Heart right ventricle (tissue), 16 donors: ENCODE measurements at regions of chrX and their contacts with region 1.

Region 1: GRCh38 chrX:12974796-12975669 is at the start of gene TMSB4X:
- DNase-seq: peak; percentile 83
- ATAC-seq: peak; percentile 77 to 95 (median 86)
- H3K4me3 ChIP-seq: peak within 1 kb of the TSS; percentile 50 to 98 (median 86)
- H3K27ac ChIP-seq: peak within 1 kb of the TSS; percentile 88 to 99 (median 96)
- H3K4me1 ChIP-seq: peaks cover 0 to 64% (median 6%) of the 10 kb centered on the region in 9 donors
- H3K27me3 ChIP-seq: peaks cover 0 to 69% (median 0%) of the 10 kb centered on the region in 7 donors
- CTCF ChIP-seq: peak in 1 of 9 donors; percentile 2
- total RNA-seq, gene TMSB4X: 700 to 2,442 (median 850) TPM

Region 2: DNA sequence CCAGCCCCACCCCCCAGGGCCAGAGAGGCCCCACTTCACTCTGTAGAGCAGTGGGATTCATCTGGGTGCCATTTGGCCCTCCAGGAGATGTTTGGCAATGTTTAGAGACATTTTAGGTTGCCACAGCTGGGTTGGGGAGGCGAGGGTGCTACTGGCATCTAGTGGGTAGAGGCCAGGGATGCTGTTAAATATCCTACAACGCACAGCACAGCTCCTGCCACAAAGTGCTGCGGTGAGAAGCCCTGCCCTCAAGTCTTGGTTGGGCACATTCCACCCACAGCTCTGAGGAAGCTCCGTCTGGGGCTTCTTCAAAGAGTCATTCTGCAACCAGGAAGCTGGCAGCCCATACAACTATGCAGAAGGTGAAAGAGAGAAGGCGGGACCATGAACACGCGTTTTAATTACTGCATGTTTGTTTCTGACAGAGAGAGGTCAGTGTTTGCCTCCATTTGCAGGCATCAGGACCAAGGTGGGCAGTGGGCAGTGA is 117.5 kb after region 1 on chrX:
- intact Hi-C with region 1: loop called in 1 of 10 experiments (anchors 10 kb)
- DNase-seq: no peak
- ATAC-seq: peak in 7 of 8 donors; percentile 34 to 69 (median 52)
- H3K4me3 ChIP-seq: no peak overlapping the region
- H3K27ac ChIP-seq: peak overlapping the region in 2 of 10 donors; percentile 69 to 90
- H3K4me1 ChIP-seq: peaks cover 0 to 60% (median 8%) of the 10 kb centered on the region in 9 donors
- H3K27me3 ChIP-seq: peaks cover 0 to 14% (median 0%) of the 10 kb centered on the region in 7 donors
- CTCF ChIP-seq: no peak

Region 3: DNA sequence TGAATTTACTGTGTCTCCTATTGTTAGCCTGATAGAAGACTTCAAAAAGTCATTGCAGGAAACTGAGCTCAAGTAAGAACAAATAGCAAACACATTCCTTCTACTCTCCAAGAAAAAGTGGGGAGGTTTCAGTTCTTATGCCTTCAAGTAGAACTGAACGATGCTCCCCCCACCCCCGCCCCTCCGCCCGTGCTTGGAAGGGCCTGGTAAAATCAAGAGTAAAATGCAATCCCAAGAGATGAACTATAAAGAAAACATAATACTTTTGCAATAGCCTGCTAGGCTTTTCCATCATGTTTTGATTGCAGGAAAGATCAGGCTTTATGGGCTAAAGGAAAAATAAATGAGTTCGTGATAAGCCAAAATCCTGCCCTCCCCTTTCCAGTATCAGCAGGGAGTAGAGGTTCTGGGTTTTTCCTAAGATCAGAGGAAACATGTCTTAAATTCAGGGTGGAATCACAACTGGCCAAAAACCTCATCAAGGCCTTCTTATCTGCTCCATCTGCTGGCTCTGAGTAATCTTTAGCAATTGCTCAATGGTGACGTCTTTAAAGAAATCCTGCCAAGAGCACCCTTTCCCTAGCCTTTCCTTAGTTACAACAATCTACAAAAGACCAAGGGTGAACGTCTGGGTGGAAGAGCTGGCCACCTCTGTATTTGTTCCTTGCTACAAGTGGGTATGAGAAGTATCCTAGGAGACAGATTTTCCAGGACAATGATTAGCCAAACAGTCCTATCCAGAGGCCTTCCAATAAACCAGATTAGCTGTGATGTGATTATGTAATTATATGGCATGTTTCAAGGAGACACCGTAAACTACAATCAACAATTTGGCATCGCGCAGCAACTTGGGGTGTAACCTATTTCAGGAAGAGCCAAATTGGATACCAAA is 135.6 kb after region 1 on chrX:
- intact Hi-C with region 1: loop called in 4 of 10 experiments (anchors 5 to 10 kb)
- DNase-seq: peak; percentile 30 to 66
- ATAC-seq: peak; percentile 77 to 95 (median 90)
- H3K4me3 ChIP-seq: no peak overlapping the region
- H3K27ac ChIP-seq: peak overlapping the region; percentile 22 to 80 (median 64)
- H3K4me1 ChIP-seq: peaks cover 0 to 32% (median 15%) of the 10 kb centered on the region in 9 donors
- H3K27me3 ChIP-seq: peaks cover 0 to 9% (median 0%) of the 10 kb centered on the region in 7 donors
- CTCF ChIP-seq: no peak

Region 4: GRCh38 chrX:13212191-13212651 is 237.2 kb after region 1 on chrX:
- intact Hi-C with region 1: loop called in 1 of 10 experiments (anchors 10 kb)
- DNase-seq: no peak
- ATAC-seq: peak in 7 of 8 donors; percentile 62 to 83 (median 74)
- H3K4me3 ChIP-seq: no peak overlapping the region
- H3K27ac ChIP-seq: peak overlapping the region in 8 of 10 donors; percentile 15 to 78 (median 51)
- H3K4me1 ChIP-seq: peaks cover 0 to 21% (median 9%) of the 10 kb centered on the region in 9 donors
- H3K27me3 ChIP-seq: peaks cover 0 to 16% (median 0%) of the 10 kb centered on the region in 7 donors
- CTCF ChIP-seq: no peak

Region 5: DNA sequence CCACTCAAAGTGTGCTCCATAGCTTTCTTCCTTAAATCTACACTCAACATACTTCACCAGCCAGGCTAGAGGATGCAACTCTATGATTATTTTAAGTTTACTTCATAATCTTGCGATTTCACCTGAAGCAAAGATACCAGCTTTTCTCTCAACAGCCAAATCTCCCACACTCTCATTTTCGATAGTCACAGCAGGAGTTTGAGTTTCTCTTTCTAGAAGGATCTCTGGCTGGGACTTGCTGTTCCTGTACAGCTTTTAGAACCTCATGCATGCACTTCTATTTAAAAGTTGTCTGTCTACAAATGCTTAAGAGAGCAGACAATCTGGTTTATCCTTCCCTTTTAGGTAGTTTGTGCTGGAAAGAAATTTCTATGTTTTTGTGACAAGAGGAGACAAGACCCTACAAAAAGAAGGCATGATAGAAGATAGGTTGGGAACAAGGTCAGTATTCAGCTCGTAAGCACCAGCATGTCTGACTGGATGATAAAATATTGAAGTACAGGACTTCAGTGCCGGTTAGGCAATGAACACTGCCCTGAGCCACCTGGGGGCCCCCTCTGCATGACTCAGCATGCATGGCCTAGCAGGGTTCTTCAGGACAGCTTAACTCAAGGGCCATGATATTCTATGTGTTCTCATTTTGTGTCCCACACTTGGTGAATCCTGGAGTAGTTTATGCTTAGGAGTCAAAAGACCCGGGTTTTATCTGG is 279.2 kb after region 1 on chrX:
- intact Hi-C with region 1: loop called in 1 of 10 experiments (anchors 10 kb)
- DNase-seq: no peak
- ATAC-seq: peak in 4 of 8 donors; percentile 36 to 52 (median 47)
- H3K4me3 ChIP-seq: no peak overlapping the region
- H3K27ac ChIP-seq: peak overlapping the region in 1 of 10 donors; percentile 13
- H3K4me1 ChIP-seq: peaks cover 0 to 22% (median 0%) of the 10 kb centered on the region in 9 donors
- H3K27me3 ChIP-seq: peaks cover 0 to 48% (median 0%) of the 10 kb centered on the region in 7 donors
- CTCF ChIP-seq: peak in 2 of 9 donors; percentile 14 to 18

Region 6: DNA sequence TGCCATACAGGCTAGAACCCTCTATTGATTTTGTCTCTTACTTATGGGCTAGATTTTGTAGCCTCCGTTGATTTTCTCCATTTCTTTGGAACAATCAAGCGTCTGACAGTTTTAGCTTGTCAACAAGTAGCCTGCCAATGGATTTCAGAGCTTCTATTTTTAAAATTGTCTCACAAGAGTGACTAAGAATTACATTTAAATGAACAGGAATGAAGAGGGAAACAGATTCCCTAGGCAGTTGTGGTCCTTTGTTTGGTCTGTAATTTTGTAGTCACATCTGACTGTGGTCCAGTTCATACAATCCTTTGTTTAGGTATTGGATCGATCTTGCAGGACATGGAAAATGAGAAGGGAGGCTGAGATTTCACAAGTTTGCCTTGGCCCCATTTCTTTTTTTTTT is 507.7 kb after region 1 on chrX:
- intact Hi-C with region 1: loop called in 4 of 10 experiments (anchors 2 to 10 kb)
- DNase-seq: no peak
- ATAC-seq: no peak
- H3K4me3 ChIP-seq: no peak overlapping the region
- H3K27ac ChIP-seq: peak overlapping the region in 5 of 10 donors; percentile 44 to 67 (median 56)
- H3K4me1 ChIP-seq: peaks cover 0 to 18% (median 6%) of the 10 kb centered on the region in 9 donors
- H3K27me3 ChIP-seq: peaks cover 0 to 61% (median 0%) of the 10 kb centered on the region in 7 donors
- CTCF ChIP-seq: no peak